HepG2 (cell line): ENCODE measurements at regions of chr1 and their contacts with region 1.

Region 1: GRCh38 chr1:8560611-8561544 is 243.0 kb downstream of the SLC45A1 start:
- DNase-seq: peak; percentile 61
- ATAC-seq: peak; percentile 24; the same call in 2 of the 3 replicates
- H3K4me3 ChIP-seq: no peak overlapping the region
- H3K27ac ChIP-seq: peak overlapping the region; percentile 7
- H3K4me1 ChIP-seq: peaks cover 57% of the 10 kb centered on the region
- H3K27me3 ChIP-seq: no peaks in the 10 kb centered on the region
- CTCF ChIP-seq: peak; percentile 83
- EP300 ChIP-seq: no peak
- POLR2A ChIP-seq: no peak
- RAD21 ChIP-seq: peak; percentile 70

Region 2: DNA sequence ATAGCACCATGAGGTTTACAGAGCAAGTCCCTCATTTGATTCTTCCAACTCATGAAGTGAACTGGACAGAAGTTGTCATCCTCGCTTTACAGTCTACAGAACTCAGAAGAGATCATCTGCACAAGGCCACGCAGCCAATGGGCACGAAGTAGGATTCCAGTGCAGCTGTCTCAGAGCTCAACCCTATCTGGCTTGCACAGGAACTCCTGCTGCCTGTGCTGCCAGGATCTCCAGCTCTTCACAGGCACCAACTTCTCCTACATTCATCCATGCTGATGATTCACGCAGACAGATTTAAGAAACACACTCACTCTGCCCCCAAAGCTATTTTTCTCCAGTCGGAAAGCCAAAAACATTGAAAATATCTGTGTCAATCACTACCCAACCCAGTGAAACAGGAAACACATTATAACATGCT is 99.5 kb after region 1 on chr1:
- CTCF ChIA-PET with region 1: no interaction called
- POLR2A ChIA-PET with region 1: no interaction called
- in situ Hi-C with region 1: loop called (anchors 10 kb)
- intact Hi-C with region 1: no loop called
- DNase-seq: no peak
- ATAC-seq: peak; percentile 17; the same call in 1 of the 3 replicates
- H3K4me3 ChIP-seq: no peak overlapping the region
- H3K27ac ChIP-seq: peak overlapping the region; percentile 43
- H3K4me1 ChIP-seq: peaks cover 62% of the 10 kb centered on the region
- H3K27me3 ChIP-seq: no peaks in the 10 kb centered on the region
- CTCF ChIP-seq: no peak
- EP300 ChIP-seq: no peak
- POLR2A ChIP-seq: no peak
- RAD21 ChIP-seq: no peak

Region 3: DNA sequence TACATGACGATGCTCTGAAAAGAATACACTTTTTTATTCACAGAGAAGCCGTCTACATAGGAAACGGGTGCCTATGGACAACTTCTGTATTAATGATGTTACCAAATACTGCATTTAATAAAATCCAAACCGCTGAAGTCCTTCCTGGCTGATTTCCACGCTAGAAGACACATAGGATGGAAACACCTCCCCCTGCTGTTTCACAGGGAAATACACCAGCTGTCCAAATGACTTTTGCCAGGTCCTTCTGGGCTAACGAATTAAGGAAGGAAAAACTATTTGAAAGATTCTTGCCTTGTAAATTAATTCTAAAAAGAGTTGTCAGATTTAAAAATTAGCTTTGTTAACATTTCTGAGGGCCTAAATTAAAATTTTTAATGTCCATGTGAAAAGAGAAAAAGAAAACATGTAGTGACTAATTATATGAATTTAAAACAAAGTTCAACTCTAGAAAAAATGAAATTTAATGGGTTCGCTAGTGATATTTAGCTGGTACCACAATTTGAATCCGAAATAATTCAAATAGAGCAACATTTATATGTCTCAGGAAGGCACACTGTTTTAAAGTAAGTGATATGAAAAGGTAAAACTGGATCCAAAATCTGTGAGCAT is 110.5 kb after region 1 on chr1:
- CTCF ChIA-PET with region 1: interaction called, 17 read pairs
- POLR2A ChIA-PET with region 1: interaction called, 9 read pairs
- in situ Hi-C with region 1: loop called (anchors 10 kb)
- intact Hi-C with region 1: loop called (anchors 1 kb)
- DNase-seq: peak; percentile 61
- ATAC-seq: peak; percentile 40; the same call in 1 of the 3 replicates
- H3K4me3 ChIP-seq: peak overlapping the region in 2 of 3 experiments; percentile 1 to 37; a peak in 1 of 6 replicates
- H3K27ac ChIP-seq: peak overlapping the region; percentile 63
- H3K4me1 ChIP-seq: peaks cover 99% of the 10 kb centered on the region
- H3K27me3 ChIP-seq: no peaks in the 10 kb centered on the region
- CTCF ChIP-seq: peak; percentile 76
- EP300 ChIP-seq: no peak
- POLR2A ChIP-seq: no peak
- RAD21 ChIP-seq: peak; percentile 53

Region 4: DNA sequence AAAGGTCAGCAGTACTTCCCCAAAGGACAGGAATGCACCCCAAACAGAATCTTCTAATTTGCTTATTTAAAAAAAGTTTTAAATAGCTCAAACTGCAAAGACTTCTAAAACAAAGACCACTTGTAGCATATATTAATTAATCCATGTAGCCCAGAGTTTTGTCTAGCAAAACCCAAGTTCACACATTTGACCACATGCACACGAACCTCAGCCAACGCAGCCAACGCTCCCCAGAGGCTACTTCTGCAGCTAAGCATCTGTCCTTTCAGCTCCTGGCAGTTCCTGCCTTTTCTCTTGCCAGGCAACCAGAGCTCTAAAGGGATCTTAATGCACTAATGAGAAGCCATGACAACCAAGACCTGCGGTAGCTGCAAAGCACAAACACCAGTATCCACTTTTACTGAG is 166.9 kb after region 1 on chr1:
- CTCF ChIA-PET with region 1: interaction called, 16 read pairs
- POLR2A ChIA-PET with region 1: interaction called, 4 read pairs
- in situ Hi-C with region 1: no loop called
- intact Hi-C with region 1: loop called (anchors 1 kb)
- DNase-seq: no peak
- ATAC-seq: no peak
- H3K4me3 ChIP-seq: no peak overlapping the region
- H3K27ac ChIP-seq: no peak overlapping the region
- H3K4me1 ChIP-seq: peaks cover 42% of the 10 kb centered on the region
- H3K27me3 ChIP-seq: no peaks in the 10 kb centered on the region
- CTCF ChIP-seq: no peak
- EP300 ChIP-seq: no peak
- POLR2A ChIP-seq: no peak
- RAD21 ChIP-seq: no peak

Region 5: GRCh38 chr1:8848663-8849386 is 287.9 kb after region 1 on chr1:
- CTCF ChIA-PET with region 1: interaction called, 4 read pairs
- POLR2A ChIA-PET with region 1: interaction called, 3 read pairs
- in situ Hi-C with region 1: loop called (anchors 25 kb)
- intact Hi-C with region 1: loop called (anchors 5 kb)
- DNase-seq: peak; percentile 88
- ATAC-seq: peak; percentile 91
- H3K4me3 ChIP-seq: peak overlapping the region; percentile 6 to 58 (median 31); a peak in 5 of 6 replicates
- H3K27ac ChIP-seq: peak overlapping the region; percentile 39
- H3K4me1 ChIP-seq: peaks cover 67% of the 10 kb centered on the region
- H3K27me3 ChIP-seq: no peaks in the 10 kb centered on the region
- CTCF ChIP-seq: peak; percentile 94
- EP300 ChIP-seq: 0 out of 4 replicates have a peak, but pooled peaks of 1 of the 2 experiments have one; percentile 6
- POLR2A ChIP-seq: 0 out of 4 replicates have a peak, but pooled peaks of 1 of the 2 experiments have one; percentile 16
- RAD21 ChIP-seq: peak; percentile 98